MCF 10A (cell line): ENCODE measurements at regions of chr6 and their contacts with region 1.

Region 1: GRCh38 chr6:46652603-46653438 is at the starts of genes CYP39A1 and SLC25A27:
- DNase-seq: peak; percentile 94
- H3K4me3 Mint-ChIP-seq: peak within 1 kb of the TSS; percentile 85
- H3K27ac Mint-ChIP-seq: peak within 1 kb of the TSS; percentile 96
- H3K4me1 Mint-ChIP-seq: peaks cover 15% of the 10 kb centered on the region
- H3K27me3 Mint-ChIP-seq: no peaks in the 10 kb centered on the region
- CTCF ChIP-seq: no peak
- total RNA-seq, gene CYP39A1: 7.2 and 7.4 TPM in 2 replicates
- total RNA-seq, gene SLC25A27: 21.7 and 36.9 TPM in 2 replicates

Region 2: DNA sequence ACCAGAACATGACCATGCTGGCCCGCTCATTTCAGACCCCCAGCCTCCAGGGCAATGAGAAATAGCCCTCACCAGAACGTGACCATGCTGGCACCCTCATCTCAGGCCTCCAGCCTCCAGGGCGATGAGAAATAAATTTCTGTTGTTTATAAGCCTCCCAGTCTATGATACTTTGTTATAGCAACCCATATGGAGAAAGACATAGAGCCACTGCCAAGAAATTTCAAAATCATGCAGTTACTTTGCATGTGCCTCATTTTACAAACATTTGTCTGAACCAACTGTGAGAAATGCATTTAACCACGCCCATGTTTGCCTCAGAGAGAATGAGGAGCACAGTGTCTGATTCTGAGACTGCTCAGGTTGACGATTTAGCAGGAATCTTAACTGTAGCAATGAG is 15.7 kb before region 1 on chr6:
- CTCF ChIA-PET with region 1: interaction called, 6 read pairs
- POLR2A ChIA-PET with region 1: interaction called, 168 read pairs
- intact Hi-C with region 1: loop called (anchors 1 kb)
- DNase-seq: peak; percentile 96
- H3K4me3 Mint-ChIP-seq: peak overlapping the region; percentile 44
- H3K27ac Mint-ChIP-seq: peak overlapping the region; percentile 98
- H3K4me1 Mint-ChIP-seq: peaks cover 30% of the 10 kb centered on the region
- H3K27me3 Mint-ChIP-seq: no peaks in the 10 kb centered on the region
- CTCF ChIP-seq: no peak